ENCODE measurements at regions of chr20 and their contacts with region 1.

Region 1: DNA sequence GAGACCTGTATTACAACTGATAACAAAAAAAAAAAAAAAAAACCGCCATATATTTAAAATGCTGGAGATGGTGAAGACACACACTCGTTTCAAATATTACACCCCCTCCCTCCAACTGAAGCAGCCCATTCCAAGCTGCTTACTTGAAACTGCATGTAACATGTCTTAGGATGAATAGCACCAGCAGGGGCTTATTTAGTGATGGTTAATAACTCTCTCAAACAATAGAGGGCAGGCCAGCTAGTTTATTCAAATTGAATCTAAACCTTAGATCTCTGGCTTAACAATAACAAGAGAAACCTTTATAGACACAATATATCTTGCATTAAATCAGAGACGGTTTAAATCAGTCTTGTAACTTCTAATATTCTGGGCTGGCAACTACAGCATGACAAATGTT is 9.3 kb upstream of the JPH2 start:
- ATAC-seq: no peak
- H3K4me3 ChIP-seq: no peak overlapping the region
- H3K27ac ChIP-seq: no peak overlapping the region
- H3K4me1 ChIP-seq: peaks cover 0 to 4% of the 10 kb centered on the region in 2 donors

Region 2: GRCh38 chr20:44109951-44110361 is 86.3 kb before region 1 on chr20:
- in situ Hi-C with region 1: loop called in 4 of 9 experiments (anchors 5 to 10 kb)
- ATAC-seq: no peak
- H3K4me3 ChIP-seq: no peak overlapping the region
- H3K27ac ChIP-seq: no peak overlapping the region
- H3K4me1 ChIP-seq: no peaks in the 10 kb centered on the region

Region 3: GRCh38 chr20:44115762-44116644 is 80.3 kb before region 1 on chr20:
- in situ Hi-C with region 1: loop called in 4 of 9 experiments (anchors 5 to 10 kb)
- ATAC-seq: peak in 2 of 8 experiments; percentile 7 to 26
- H3K4me3 ChIP-seq: no peak overlapping the region
- H3K27ac ChIP-seq: no peak overlapping the region
- H3K4me1 ChIP-seq: no peaks in the 10 kb centered on the region